Activated CD4-positive, alpha-beta memory T cell treated with anti-CD3 and anti-CD28 coated beads for 36 hours (primary cell): ENCODE measurements at regions of chr2 and their contacts with region 1.

Region 1: GRCh38 chr2:39243476-39244123 is at the start of gene CDKL4:
- DNase-seq: peak; percentile 61
- H3K4me3 Mint-ChIP-seq: peak within 1 kb of the TSS; percentile 76
- H3K27ac Mint-ChIP-seq: peak within 1 kb of the TSS; percentile 36
- H3K4me1 Mint-ChIP-seq: peaks cover 12% of the 10 kb centered on the region
- H3K27me3 Mint-ChIP-seq: no peaks in the 10 kb centered on the region
- total RNA-seq, gene CDKL4: 0.14 to 0.22 TPM

Region 2: GRCh38 chr2:39216346-39217191 is 27.0 kb before region 1 on chr2:
- CTCF ChIA-PET with region 1: no interaction called
- POLR2A ChIA-PET with region 1: no interaction called
- intact Hi-C with region 1: no loop called
- DNase-seq: peak; percentile 79
- H3K4me3 Mint-ChIP-seq: peak overlapping the region; percentile 38
- H3K27ac Mint-ChIP-seq: peak overlapping the region; percentile 85
- H3K4me1 Mint-ChIP-seq: peaks cover 56% of the 10 kb centered on the region
- H3K27me3 Mint-ChIP-seq: no peaks in the 10 kb centered on the region

Region 3: DNA sequence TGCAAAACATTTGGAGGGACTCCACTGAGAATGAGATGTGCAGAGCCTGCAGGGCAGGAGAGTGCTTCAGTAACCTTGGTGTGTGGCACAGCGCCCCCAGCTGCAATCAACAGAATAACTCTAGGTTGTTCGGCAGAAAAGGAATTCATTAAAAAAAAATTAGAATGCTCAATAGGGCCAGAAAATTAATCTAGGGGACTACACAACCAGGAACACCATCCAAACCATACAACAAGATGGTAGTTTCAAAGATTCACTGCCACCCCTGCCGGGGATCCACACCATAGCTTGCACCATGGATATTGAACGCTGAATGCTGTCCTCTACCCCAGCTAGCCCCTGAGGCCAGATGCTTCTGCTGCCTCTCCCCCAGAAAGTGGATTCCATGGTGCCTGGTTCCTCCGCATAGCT is 485.3 kb after region 1 on chr2:
- CTCF ChIA-PET with region 1: no interaction called
- POLR2A ChIA-PET with region 1: no interaction called
- intact Hi-C with region 1: loop called (anchors 10 kb)
- DNase-seq: peak; percentile 50
- H3K4me3 Mint-ChIP-seq: no peak overlapping the region
- H3K27ac Mint-ChIP-seq: no peak overlapping the region
- H3K4me1 Mint-ChIP-seq: peaks cover 9% of the 10 kb centered on the region
- H3K27me3 Mint-ChIP-seq: peaks cover 3% of the 10 kb centered on the region